ENCODE measurements at regions of chr9 and their contacts with region 1.

Region 1: GRCh38 chr9:81601639-81602628 is 87.4 kb downstream of the TLE1 start:
- DNase-seq: no peak

Region 2: DNA sequence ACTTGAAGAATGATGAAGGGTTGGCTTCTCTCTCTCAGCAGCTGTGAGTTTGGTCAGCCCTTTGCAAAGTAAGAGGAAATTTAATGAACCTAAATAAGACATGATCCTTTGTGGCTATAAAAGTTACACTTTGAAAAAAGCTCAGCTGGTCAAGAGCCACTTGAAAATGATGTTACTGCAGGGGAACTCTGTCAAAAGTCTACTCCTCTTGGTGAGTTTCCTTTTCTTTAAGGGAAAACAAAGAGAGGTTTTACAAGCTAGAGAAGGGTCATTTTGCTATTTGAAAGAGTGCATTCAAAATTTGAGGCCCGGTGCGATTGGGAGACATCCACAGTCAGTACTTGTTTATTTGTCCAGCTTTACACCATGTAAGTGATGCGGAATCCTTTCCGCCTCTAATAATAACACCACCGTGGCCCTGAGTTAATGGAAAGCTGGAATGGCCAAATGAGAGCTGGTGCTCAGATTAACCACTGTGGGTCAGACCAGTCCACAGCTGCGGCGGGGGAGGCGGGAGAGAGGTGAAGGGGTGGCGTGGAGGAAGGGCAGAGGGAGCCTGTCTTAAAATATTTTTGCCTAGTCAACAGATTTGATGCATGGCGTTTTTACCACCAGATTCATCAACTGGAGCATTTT is 1626.2 kb before region 1 on chr9:
- intact Hi-C with region 1: no loop called
- DNase-seq: no peak

Region 3: DNA sequence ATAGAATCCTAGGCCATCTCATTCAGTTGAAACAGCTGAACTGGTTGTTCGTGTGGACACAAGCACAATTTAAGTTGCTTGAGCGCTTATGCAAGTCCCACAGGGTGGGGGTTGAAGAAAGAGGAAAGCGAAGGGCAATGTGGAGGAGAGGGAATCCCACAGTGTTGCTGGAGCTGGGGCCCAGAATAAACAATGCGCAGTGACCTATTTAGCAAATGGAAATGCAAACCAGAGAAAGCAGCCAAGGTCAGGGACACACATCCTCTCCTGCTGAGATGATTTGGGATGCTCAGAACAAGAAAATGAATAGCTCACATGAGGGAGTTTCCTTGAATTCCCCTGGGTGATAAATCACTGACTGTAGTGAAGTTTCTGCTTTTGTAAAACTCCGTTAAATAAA is 1191.8 kb before region 1 on chr9:
- intact Hi-C with region 1: loop called in 1 of 2 experiments (anchors 5 kb)
- DNase-seq: no peak

Region 4: GRCh38 chr9:81588148-81588871 is 13.6 kb before region 1 on chr9:
- intact Hi-C with region 1: no loop called
- DNase-seq: no peak

Measured in posterior vena cava (tissue), 2 donors.